ENCODE measurements at regions of chr11 and their contacts with region 1.

Region 1: DNA sequence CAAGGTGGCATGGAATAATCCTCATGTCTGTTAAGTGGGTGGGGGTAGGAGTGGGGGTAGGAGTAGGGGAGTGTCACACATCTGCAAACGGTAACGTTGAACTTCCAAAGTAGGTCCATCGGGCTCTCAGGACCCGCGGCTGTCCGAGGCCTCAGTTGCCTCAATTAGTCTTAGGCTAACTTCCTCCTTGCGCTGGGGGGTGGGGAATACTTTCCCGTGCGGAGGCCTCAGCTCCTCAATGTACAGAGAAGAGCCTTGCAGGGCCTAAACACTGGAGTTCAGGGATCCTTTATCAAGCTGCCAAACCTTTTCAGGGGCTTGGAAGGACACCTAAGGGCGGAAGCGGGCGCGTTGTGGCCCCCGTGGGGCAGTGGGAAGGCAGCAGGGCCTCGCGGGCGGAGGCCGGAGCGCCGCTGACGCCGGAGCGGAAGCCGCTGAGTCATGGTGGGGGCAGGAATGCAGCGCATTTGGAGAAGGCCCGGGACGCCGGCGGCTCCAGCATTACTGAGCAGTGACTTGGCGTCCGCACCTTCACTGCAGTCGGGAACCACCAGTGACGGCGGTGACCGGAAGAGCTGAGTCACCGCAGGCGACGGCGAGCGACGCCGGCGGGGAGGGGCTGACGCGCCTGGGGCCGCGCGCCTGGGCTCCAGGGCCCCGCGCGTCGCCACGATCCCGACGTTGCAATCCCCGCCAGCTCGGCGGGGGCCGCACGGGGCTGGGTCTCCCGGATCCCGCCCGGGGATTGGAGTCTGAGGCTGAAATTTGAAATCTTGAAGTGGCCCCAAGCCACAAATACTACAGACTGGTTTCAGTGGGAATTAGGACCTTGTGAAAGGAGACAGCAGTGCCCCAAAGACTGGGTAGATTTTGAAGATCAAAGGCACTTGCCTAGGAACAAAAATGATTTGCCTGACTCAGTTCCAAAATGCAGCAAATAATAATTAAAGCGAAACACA is 20.2 kb upstream of the IPO7 start:
- DNase-seq: peak; percentile 98
- ATAC-seq: peak; percentile 89
- H3K4me3 ChIP-seq: peak overlapping the region; percentile 50; the same call in 1 of the 2 replicates
- H3K27ac ChIP-seq: peak overlapping the region; percentile 99
- H3K4me1 ChIP-seq: peaks cover 37% of the 10 kb centered on the region
- H3K27me3 ChIP-seq: no peaks in the 10 kb centered on the region
- CTCF ChIP-seq: no peak

Region 2: DNA sequence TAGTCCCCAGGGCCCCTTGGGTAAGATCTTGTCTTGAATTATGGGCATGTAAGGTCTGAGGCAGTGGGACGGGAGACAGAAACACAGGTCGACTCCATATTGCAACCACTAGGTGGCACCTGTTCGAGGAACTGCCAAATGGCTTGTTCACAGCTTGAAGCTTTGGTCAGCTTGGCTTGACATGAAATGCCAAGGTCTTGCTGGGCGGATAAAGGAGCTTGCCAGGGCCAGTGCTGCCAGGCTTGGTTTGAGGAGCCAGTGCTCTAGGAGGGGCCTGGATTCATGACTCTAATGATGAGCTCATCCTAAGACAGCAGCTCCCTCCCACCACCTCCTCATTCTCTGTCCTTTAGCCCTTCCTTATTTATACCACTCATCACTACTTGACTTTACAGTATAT is 348.6 kb before region 1 on chr11:
- CTCF ChIA-PET with region 1: no interaction called
- POLR2A ChIA-PET with region 1: no interaction called
- intact Hi-C with region 1: no loop called
- DNase-seq: peak; percentile 77
- ATAC-seq: peak; percentile 93
- H3K4me3 ChIP-seq: no peak overlapping the region
- H3K27ac ChIP-seq: no peak overlapping the region
- H3K4me1 ChIP-seq: no peaks in the 10 kb centered on the region
- H3K27me3 ChIP-seq: no peaks in the 10 kb centered on the region
- CTCF ChIP-seq: peak; percentile 76

Region 3: GRCh38 chr11:9280655-9281301 is 83.5 kb before region 1 on chr11:
- CTCF ChIA-PET with region 1: no interaction called
- POLR2A ChIA-PET with region 1: no interaction called
- intact Hi-C with region 1: loop called (anchors 5 kb)
- DNase-seq: peak; percentile 77
- ATAC-seq: peak; percentile 61
- H3K4me3 ChIP-seq: no peak overlapping the region
- H3K27ac ChIP-seq: no peak overlapping the region
- H3K4me1 ChIP-seq: peaks cover 8% of the 10 kb centered on the region; the same call in 1 of the 2 replicates
- H3K27me3 ChIP-seq: no peaks in the 10 kb centered on the region
- CTCF ChIP-seq: no peak

Region 4: DNA sequence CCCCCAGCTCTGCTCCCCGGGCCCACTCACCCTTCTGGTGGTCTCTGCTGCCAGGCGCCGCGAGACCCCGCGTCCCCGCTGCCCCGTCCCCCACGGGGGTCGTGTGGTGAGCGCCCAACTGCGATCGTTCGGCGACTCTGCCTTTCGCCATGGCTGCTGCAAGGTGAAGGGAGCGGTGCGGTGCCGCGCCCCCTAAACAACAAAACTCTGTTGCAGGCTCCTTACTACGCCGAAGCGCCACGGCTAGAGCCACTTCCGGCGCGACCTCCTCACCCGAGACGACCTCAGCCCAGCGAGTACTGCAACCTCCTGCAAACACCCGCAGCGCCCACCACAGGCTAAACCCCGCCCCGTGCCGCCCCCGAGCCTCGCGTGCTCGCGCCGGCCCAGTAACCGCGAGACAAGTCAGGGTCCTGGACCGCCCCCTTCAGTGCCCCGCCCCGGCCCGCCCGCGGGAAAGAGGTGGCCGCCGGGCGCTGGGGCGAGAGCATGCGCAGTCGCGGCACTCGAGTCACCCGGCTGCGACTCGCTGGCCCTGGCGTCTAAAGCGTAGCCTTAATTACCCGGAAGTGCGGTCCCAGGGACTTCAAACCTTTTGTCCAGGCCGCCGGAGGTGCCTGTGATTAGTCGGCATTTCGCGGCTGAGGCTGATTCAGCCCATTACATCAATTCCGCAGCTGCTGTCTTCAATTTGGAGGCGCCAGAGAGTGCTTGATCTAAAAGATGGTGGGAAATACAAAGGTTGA is 49.8 kb before region 1 on chr11 and contains the start of gene TMEM41B:
- CTCF ChIA-PET with region 1: no interaction called
- POLR2A ChIA-PET with region 1: no interaction called
- intact Hi-C with region 1: loop called (anchors 1 kb)
- DNase-seq: peak; percentile 96
- ATAC-seq: peak; percentile 96
- H3K4me3 ChIP-seq: peak within 1 kb of the TSS; percentile 98
- H3K27ac ChIP-seq: peak within 1 kb of the TSS; percentile 86
- H3K4me1 ChIP-seq: peaks cover 17% of the 10 kb centered on the region
- H3K27me3 ChIP-seq: no peaks in the 10 kb centered on the region
- CTCF ChIP-seq: peak; percentile 25; the same call in 1 of the 2 replicates
- total RNA-seq, gene TMEM41B: 83.6 and 87.6 TPM in 2 replicates

Region 5: DNA sequence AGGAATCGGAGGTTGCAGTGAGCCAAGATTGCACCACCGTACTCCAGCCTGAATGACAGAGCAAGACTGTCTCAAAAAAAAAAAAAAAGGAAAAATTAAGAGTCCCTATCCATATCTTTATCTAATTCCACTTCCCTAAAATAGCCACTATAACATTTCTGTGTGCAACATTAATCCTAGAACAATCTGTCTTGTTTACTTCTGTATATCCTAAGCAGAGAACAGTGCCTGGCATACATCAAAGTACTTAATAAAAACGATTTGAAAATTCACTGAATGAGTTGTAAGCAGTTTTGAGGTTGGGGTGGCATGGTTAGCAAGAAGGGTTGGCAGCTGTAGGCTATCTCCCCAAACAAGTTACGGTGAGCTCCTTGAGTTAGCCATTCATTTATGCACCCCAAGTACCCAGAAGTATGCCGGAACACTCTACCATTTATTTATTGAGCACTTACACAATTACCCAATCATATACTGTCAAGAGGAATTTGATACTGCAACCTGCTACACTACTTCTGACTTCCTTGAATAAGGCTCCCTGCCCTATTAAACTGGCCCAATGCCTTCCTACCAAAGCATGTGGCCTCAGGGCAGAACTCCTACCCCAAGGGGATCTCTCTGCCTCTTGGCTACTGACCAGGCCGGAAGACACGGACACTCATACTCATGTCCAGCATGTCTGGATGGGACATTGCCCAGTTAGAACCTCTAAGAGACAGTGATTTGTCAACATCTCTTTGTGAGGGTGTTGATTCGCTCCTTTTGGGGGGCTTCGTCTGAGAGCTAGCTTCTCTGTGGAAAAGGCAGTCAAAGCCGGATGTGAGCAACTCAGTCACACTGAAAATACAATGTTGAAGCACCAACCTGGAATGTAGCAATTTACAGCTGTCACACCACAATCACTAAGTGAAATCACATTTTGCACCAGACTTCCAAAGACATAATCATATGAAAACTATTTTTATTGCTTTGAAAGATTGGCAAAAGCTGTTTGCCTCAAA is 33.5 kb before region 1 on chr11:
- CTCF ChIA-PET with region 1: interaction called, 3 read pairs
- POLR2A ChIA-PET with region 1: no interaction called
- intact Hi-C with region 1: loop called (anchors 1 kb)
- DNase-seq: peak; percentile 90
- ATAC-seq: peak; percentile 89
- H3K4me3 ChIP-seq: peak overlapping the region; percentile 6; the same call in 1 of the 2 replicates
- H3K27ac ChIP-seq: peak overlapping the region; percentile 94
- H3K4me1 ChIP-seq: peaks cover 26% of the 10 kb centered on the region
- H3K27me3 ChIP-seq: no peaks in the 10 kb centered on the region
- CTCF ChIP-seq: no peak

Region 6: GRCh38 chr11:9384535-9385303 is 20.5 kb after region 1 on chr11 and contains the start of gene IPO7:
- CTCF ChIA-PET with region 1: interaction called, 3 read pairs
- POLR2A ChIA-PET with region 1: no interaction called
- intact Hi-C with region 1: loop called (anchors 1 kb)
- DNase-seq: peak; percentile 90
- ATAC-seq: peak; percentile 94
- H3K4me3 ChIP-seq: peak within 1 kb of the TSS; percentile 98
- H3K27ac ChIP-seq: peak within 1 kb of the TSS; percentile 82
- H3K4me1 ChIP-seq: peaks cover 9% of the 10 kb centered on the region
- H3K27me3 ChIP-seq: no peaks in the 10 kb centered on the region
- CTCF ChIP-seq: peak; percentile 41
- total RNA-seq, gene IPO7: 78.9 and 109 TPM in 2 replicates

Region 7: GRCh38 chr11:9506489-9507276 is 142.4 kb after region 1 on chr11:
- CTCF ChIA-PET with region 1: no interaction called
- POLR2A ChIA-PET with region 1: interaction called, 28 read pairs
- intact Hi-C with region 1: no loop called
- DNase-seq: peak; percentile 90
- ATAC-seq: peak; percentile 88
- H3K4me3 ChIP-seq: no peak overlapping the region
- H3K27ac ChIP-seq: no peak overlapping the region
- H3K4me1 ChIP-seq: no peaks in the 10 kb centered on the region
- H3K27me3 ChIP-seq: no peaks in the 10 kb centered on the region
- CTCF ChIP-seq: peak; percentile 91

Region 8: DNA sequence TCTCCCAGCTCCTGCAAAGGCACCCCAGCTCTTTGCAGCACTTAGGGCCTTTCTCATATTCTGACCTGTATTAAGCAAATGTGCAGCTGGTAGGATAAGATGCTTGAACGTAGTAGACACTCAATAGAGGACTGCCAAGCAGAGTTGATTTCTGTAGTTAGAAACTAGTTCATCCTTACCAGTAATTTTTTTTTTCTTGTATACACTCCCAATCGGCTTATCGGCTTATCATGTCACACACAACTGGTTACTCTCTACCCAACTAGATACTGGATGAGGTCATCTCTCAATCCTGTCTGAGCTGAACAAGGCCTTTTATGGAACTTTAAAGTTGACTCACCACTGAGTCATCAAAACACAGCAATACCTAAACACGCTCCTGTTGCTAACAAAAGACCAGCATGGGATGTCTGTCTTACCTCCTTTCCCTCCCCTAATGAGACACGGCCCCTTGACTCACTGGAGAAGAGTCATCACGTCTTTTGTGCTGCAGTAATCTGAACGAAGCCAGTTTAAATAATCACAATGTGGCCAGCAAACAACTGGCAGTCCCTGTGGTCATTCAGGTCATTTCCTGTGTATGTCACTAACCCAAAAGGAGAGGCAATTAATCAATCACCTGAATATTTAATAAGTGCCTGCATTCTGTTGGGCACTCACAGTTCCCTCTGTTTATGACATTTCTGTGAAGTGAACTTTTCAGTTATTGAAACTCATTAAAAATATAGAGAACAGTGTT is 201.8 kb after region 1 on chr11:
- CTCF ChIA-PET with region 1: no interaction called
- POLR2A ChIA-PET with region 1: no interaction called
- intact Hi-C with region 1: loop called (anchors 2 kb)
- DNase-seq: peak; percentile 99
- ATAC-seq: peak; percentile 83
- H3K4me3 ChIP-seq: peak overlapping the region; percentile 48; the same call in 1 of the 2 replicates
- H3K27ac ChIP-seq: peak overlapping the region; percentile 98
- H3K4me1 ChIP-seq: peaks cover 65% of the 10 kb centered on the region
- H3K27me3 ChIP-seq: no peaks in the 10 kb centered on the region
- CTCF ChIP-seq: no peak

Region 9: DNA sequence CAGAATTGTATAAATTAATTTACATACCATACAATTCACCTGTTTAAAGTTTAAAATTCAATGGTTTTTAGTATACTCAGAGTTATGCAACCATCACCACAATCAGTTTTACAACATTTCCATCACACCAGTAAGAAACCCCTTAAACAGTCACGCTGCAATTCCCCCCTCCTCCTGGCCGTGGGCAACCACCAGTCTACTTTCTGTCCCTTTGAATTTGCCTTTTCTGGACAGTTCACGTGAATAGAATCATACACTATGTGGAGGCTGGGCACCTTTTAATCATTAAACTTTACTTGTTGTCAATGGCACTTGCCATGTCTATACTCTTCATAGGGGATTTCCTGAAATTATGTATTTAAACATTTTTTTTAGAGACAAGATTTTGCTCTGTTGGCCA is 279.5 kb after region 1 on chr11:
- CTCF ChIA-PET with region 1: no interaction called
- POLR2A ChIA-PET with region 1: no interaction called
- intact Hi-C with region 1: no loop called
- DNase-seq: no peak
- ATAC-seq: no peak
- H3K4me3 ChIP-seq: no peak overlapping the region
- H3K27ac ChIP-seq: no peak overlapping the region
- H3K4me1 ChIP-seq: no peaks in the 10 kb centered on the region
- H3K27me3 ChIP-seq: no peaks in the 10 kb centered on the region
- CTCF ChIP-seq: no peak

Measured in PC-3 (cell line).